Activated CD4-positive, alpha-beta T cell treated with anti-CD3 and anti-CD28 coated beads, Interleukin-2, amount 10 ng/mL, durations not matched to agents 7 days and 5 days (primary cell): ENCODE measurements at regions of chr2 and their contacts with region 1.

Region 1: GRCh38 chr2:98649135-98649991 is 41.0 kb downstream of the UNC50 start:
- DNase-seq: peak; percentile 88
- H3K4me3 Mint-ChIP-seq: no peak overlapping the region
- H3K27ac Mint-ChIP-seq: peak overlapping the region; percentile 57
- H3K4me1 Mint-ChIP-seq: peaks cover 55% of the 10 kb centered on the region
- H3K27me3 Mint-ChIP-seq: no peaks in the 10 kb centered on the region

Region 2: GRCh38 chr2:98191883-98192282 is 457.5 kb before region 1 on chr2:
- CTCF ChIA-PET with region 1: no interaction called
- POLR2A ChIA-PET with region 1: no interaction called
- DNase-seq: no peak
- H3K4me3 Mint-ChIP-seq: no peak overlapping the region
- H3K27ac Mint-ChIP-seq: no peak overlapping the region
- H3K4me1 Mint-ChIP-seq: no peaks in the 10 kb centered on the region
- H3K27me3 Mint-ChIP-seq: peaks cover 13% of the 10 kb centered on the region

Region 3: DNA sequence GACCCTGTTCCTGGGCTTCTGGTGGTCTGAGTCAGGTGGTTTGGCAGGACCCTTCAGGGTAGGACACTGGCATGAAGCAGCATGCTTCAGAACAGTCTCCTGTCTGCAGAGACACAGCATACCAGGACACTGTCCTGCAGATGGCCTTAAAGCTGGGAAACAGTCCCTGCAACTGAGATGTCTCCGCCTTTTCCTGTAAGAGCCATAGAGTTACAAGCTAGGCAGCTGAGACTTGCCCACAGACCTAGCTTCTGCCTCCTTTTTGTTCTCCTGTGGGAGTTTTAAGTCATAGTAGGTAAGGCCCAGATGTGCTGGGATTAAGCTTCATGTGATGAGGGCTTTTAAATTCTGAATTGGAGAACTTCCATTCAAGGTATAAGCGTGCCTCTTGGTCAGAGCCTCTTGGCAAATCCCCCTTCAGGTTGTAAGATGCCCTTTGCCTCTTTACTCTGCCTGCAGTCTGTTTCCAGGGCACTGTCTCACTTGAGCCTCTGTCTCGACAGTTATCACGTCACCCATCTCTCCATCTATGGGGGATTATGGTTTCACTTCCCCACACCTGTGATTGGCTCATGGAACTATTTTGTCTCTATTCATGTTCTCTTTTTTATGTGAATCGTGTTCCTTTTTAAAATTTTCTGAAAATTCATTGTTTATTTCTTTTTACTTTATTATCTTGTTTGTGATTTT is 92.9 kb before region 1 on chr2:
- CTCF ChIA-PET with region 1: no interaction called
- POLR2A ChIA-PET with region 1: no interaction called
- DNase-seq: no peak
- H3K4me3 Mint-ChIP-seq: no peak overlapping the region
- H3K27ac Mint-ChIP-seq: peak overlapping the region; percentile 61
- H3K4me1 Mint-ChIP-seq: peaks cover 81% of the 10 kb centered on the region
- H3K27me3 Mint-ChIP-seq: no peaks in the 10 kb centered on the region

Region 4: GRCh38 chr2:98632351-98632750 is 17.0 kb before region 1 on chr2:
- CTCF ChIA-PET with region 1: interaction called, 13 read pairs
- POLR2A ChIA-PET with region 1: no interaction called
- DNase-seq: no peak
- H3K4me3 Mint-ChIP-seq: no peak overlapping the region
- H3K27ac Mint-ChIP-seq: no peak overlapping the region
- H3K4me1 Mint-ChIP-seq: peaks cover 25% of the 10 kb centered on the region
- H3K27me3 Mint-ChIP-seq: no peaks in the 10 kb centered on the region

Region 5: GRCh38 chr2:98731041-98731893 is 81.9 kb after region 1 on chr2 and contains the start of gene MGAT4A:
- CTCF ChIA-PET with region 1: interaction called, 11 read pairs
- POLR2A ChIA-PET with region 1: interaction called, 7 read pairs
- DNase-seq: peak; percentile 82
- H3K4me3 Mint-ChIP-seq: peak within 1 kb of the TSS; percentile 94
- H3K27ac Mint-ChIP-seq: peak within 1 kb of the TSS; percentile 95
- H3K4me1 Mint-ChIP-seq: peaks cover 59% of the 10 kb centered on the region
- H3K27me3 Mint-ChIP-seq: no peaks in the 10 kb centered on the region
- total RNA-seq, gene MGAT4A: 93.9 to 109 TPM

Region 6: GRCh38 chr2:98827625-98828368 is 178.4 kb after region 1 on chr2:
- CTCF ChIA-PET with region 1: interaction called, 10 read pairs
- POLR2A ChIA-PET with region 1: no interaction called
- DNase-seq: no peak
- H3K4me3 Mint-ChIP-seq: no peak overlapping the region
- H3K27ac Mint-ChIP-seq: no peak overlapping the region
- H3K4me1 Mint-ChIP-seq: peaks cover 60% of the 10 kb centered on the region
- H3K27me3 Mint-ChIP-seq: peaks cover 5% of the 10 kb centered on the region

Region 7: GRCh38 chr2:98835831-98836385 is 186.5 kb after region 1 on chr2:
- CTCF ChIA-PET with region 1: interaction called, 16 read pairs
- POLR2A ChIA-PET with region 1: no interaction called
- DNase-seq: peak; percentile 59
- H3K4me3 Mint-ChIP-seq: peak overlapping the region; percentile 4
- H3K27ac Mint-ChIP-seq: peak overlapping the region; percentile 88
- H3K4me1 Mint-ChIP-seq: peaks cover 48% of the 10 kb centered on the region
- H3K27me3 Mint-ChIP-seq: peaks cover 10% of the 10 kb centered on the region